ENCODE measurements at regions of chr12 and their contacts with region 1.

Region 1: DNA sequence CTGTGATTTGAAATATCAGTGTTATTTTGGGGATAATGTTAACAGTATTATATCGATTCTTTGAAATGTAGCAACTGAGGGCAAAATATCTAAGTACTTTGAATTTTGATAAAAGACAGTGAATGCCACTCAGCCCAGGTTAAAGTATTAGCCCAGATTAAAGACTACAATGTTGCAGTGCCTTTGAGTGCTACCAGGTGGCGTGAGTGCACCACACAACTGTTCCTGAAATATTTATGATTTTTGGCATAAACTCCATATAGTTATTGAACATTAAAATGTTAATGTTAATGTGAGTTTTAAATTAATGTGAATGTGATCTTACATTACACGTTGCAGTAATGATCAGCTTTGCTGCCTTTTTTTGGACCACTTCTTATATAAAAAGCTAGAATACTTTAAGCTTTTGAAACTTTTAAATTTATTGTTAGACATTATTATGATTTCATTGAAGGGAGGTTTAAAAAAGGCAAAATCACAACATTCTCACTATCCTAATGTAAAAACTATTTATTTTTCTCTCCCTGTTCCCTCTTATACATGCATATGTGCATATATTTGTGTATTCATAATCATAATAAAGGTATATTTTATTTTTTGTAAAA is 22.5 kb downstream of the MRPS35 start:
- DNase-seq: peak; percentile 38 to 41
- H3K4me3 ChIP-seq: no peak overlapping the region
- H3K4me1 ChIP-seq: 0 out of 2 replicates have a peak, but pooled peaks cover 3% of the 10 kb centered on the region
- H3K27me3 ChIP-seq: no peaks in the 10 kb centered on the region

Region 2: DNA sequence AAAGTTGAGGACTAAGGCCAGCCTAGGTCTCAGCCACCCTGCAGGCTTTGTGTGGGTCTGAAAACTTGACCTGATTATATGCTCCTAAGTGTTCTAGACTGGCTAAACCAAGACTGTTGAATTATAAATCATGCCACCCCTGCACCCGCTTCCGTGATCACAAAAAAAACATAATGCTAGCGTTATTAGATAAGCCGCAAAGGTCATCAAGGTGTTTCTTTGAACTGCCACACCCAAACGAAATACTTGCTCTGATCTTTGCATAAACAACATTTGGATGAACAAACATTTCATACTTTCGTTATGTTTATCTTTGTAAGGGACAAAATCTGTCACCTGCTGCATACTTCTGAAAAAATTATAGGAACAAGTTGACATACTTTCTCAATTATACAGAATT is 284.1 kb before region 1 on chr12:
- in situ Hi-C with region 1: no loop called
- DNase-seq: no peak
- H3K4me3 ChIP-seq: no peak overlapping the region
- H3K4me1 ChIP-seq: peaks cover 16% of the 10 kb centered on the region
- H3K27me3 ChIP-seq: no peaks in the 10 kb centered on the region

Region 3: DNA sequence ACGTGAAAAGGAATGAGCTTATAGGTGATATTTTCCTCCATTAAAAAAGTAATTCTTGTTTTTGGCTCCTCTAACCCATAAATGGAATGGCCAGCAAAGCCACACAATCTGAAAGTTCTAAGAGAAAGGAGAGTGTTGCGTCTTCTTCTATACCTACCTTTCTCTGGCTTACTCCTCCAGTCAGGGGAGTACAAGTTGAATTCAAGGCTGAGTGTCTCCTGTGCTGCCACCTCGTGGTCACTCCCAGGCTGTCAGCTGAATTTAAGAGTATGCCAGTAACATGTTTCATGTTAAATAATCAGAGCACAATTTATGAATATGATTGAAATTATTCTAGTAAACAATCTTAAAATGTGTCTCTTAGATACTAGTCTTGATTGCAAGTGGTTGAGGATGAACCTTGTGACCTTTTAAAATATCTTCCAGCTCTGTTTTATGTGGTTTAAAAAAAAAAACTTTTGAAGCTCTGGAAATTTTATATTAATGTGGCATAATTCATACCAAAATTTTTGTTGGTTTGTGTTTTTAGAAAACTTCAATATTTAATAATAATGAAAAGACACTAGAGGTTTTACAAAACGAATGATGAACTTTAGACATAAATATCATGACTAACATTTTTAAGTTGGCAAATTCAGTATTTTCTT is 207.7 kb after region 1 on chr12:
- in situ Hi-C with region 1: loop called (anchors 10 kb)
- DNase-seq: peak; percentile 60 to 80
- H3K4me3 ChIP-seq: no peak overlapping the region
- H3K4me1 ChIP-seq: no peaks in the 10 kb centered on the region
- H3K27me3 ChIP-seq: no peaks in the 10 kb centered on the region

Region 4: GRCh38 chr12:27969624-27970400 is 236.7 kb after region 1 on chr12:
- in situ Hi-C with region 1: no loop called
- DNase-seq: peak; percentile 70 to 85
- H3K4me3 ChIP-seq: peak overlapping the region; percentile 37
- H3K4me1 ChIP-seq: peaks cover 12% of the 10 kb centered on the region; the same call in 1 of the 2 replicates
- H3K27me3 ChIP-seq: no peaks in the 10 kb centered on the region